CD8-positive, alpha-beta memory T cell (primary cell): ENCODE measurements at regions of chr6 and their contacts with region 1.

Region 1: DNA sequence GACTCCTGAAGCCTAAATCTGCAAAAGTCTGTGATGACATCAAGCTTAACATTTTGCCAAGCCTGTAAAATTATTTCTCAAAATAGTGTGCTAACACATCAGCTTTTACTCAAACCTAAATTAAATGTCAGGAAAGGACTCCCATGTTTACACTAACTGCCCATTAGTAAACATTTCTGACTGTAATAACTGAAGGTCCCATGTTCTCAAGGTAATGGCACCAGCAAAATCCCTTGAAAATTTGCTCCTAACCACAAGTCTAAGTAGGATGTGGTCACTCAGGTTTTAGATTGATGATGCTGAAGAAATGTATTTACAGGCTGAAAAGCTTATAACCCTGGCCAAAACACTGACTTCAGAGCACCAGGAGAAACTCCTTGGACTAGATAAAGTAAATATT is 33.0 kb downstream of the BACH2 start:
- DNase-seq: no peak
- H3K4me3 ChIP-seq: no peak overlapping the region
- H3K4me3 Mint-ChIP-seq: no peak overlapping the region
- H3K27ac ChIP-seq: no peak overlapping the region
- H3K27ac Mint-ChIP-seq: no peak overlapping the region
- H3K4me1 ChIP-seq: peaks cover 81% of the 10 kb centered on the region
- H3K4me1 Mint-ChIP-seq: peaks cover 32 to 56% (median 43%) of the 10 kb centered on the region in 3 donors
- H3K27me3 ChIP-seq: no peaks in the 10 kb centered on the region
- H3K27me3 Mint-ChIP-seq: peaks cover 0 to 3% of the 10 kb centered on the region in 2 donors

Region 2: DNA sequence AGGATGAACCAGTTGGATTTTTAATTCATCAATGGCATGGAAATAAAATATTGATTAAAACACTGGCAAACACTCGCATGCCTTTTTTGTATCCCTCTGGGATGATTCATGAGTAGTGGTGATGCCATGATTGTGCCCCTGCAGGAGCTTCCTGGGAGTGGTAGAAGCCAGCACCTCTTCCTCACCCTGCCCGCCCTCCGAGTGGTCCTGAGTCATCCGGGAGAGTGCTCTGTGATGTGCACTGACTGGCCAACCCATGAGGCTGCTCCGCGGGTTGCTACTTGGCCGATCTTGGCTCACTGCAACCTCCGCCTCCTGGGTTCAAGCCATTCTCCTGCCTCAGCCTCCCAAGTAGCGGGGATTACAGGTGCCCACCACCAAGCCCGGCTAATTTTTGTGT is 341.9 kb before region 1 on chr6:
- CTCF ChIA-PET with region 1: no interaction called
- POLR2A ChIA-PET with region 1: no interaction called
- DNase-seq: no peak
- H3K4me3 ChIP-seq: no peak overlapping the region
- H3K4me3 Mint-ChIP-seq: no peak overlapping the region
- H3K27ac ChIP-seq: no peak overlapping the region
- H3K27ac Mint-ChIP-seq: no peak overlapping the region
- H3K4me1 ChIP-seq: no peaks in the 10 kb centered on the region
- H3K4me1 Mint-ChIP-seq: peaks cover 10 to 14% (median 12%) of the 10 kb centered on the region in 3 donors
- H3K27me3 ChIP-seq: no peaks in the 10 kb centered on the region
- H3K27me3 Mint-ChIP-seq: peaks cover 6 to 10% of the 10 kb centered on the region in 2 donors

Region 3: GRCh38 chr6:90214461-90214860 is 49.2 kb before region 1 on chr6:
- CTCF ChIA-PET with region 1: no interaction called
- POLR2A ChIA-PET with region 1: interaction called, 21 read pairs
- DNase-seq: no peak
- H3K4me3 ChIP-seq: no peak overlapping the region
- H3K4me3 Mint-ChIP-seq: no peak overlapping the region
- H3K27ac ChIP-seq: no peak overlapping the region
- H3K27ac Mint-ChIP-seq: peak overlapping the region in 1 of 8 donors; percentile 46
- H3K4me1 ChIP-seq: peaks cover 92% of the 10 kb centered on the region
- H3K4me1 Mint-ChIP-seq: peaks cover 17 to 29% (median 18%) of the 10 kb centered on the region in 3 donors
- H3K27me3 ChIP-seq: no peaks in the 10 kb centered on the region
- H3K27me3 Mint-ChIP-seq: peaks cover 0 to 2% of the 10 kb centered on the region in 2 donors